CD4-positive, alpha-beta T cell (primary cell): ENCODE measurements at regions of chr11 and their contacts with region 1.

Region 1: DNA sequence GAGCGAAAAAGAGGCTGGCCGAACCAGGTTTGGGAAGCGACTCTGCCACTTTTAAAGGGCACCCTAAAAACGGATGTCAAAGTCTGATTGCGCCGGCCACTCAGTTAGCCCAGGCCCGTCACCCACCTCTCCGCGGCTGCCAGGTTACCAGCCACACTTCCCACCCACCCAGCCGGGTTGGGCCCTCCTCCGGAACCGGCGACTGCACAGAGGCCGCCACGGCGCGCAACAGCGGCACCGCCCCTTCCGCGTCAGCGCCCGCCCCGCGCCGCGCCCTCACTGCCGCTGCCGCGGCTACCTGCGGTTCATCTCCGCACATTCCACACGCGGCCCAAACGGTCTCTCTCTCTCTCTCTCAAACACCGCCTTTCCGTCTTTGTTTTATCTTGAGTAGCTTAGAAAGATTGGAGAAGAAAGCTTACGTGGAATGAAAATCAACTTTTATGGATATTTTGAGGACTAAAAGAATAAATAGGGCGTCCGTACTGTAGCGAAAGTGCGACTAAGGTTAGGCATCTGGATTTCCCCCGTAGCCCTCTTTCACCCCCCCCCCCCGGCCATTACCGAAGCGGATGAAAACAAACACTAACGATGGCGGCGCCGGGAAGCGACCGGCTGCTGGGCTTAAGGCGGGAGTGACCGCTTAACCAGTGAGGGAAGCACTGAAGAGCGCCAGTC is at the starts of genes ATG13 and HARBI1:
- DNase-seq: peak; percentile 84 to 96 (median 90)
- ATAC-seq: peak; percentile 92
- H3K4me3 ChIP-seq: peak within 1 kb of the TSS; percentile 76
- H3K4me3 Mint-ChIP-seq: peak within 1 kb of the TSS; percentile 100
- H3K27ac ChIP-seq: peak within 1 kb of the TSS; percentile 98 to 99
- H3K27ac Mint-ChIP-seq: peak within 1 kb of the TSS; percentile 97
- H3K4me1 ChIP-seq: peaks cover 45% of the 10 kb centered on the region
- H3K4me1 Mint-ChIP-seq: peaks cover 48% of the 10 kb centered on the region
- H3K27me3 ChIP-seq: no peaks in the 10 kb centered on the region
- H3K27me3 Mint-ChIP-seq: no peaks in the 10 kb centered on the region
- CTCF ChIP-seq: no peak
- total RNA-seq, gene ATG13: 95.7 to 102 TPM
- total RNA-seq, gene HARBI1: 18.2 to 18.7 TPM

Region 2: DNA sequence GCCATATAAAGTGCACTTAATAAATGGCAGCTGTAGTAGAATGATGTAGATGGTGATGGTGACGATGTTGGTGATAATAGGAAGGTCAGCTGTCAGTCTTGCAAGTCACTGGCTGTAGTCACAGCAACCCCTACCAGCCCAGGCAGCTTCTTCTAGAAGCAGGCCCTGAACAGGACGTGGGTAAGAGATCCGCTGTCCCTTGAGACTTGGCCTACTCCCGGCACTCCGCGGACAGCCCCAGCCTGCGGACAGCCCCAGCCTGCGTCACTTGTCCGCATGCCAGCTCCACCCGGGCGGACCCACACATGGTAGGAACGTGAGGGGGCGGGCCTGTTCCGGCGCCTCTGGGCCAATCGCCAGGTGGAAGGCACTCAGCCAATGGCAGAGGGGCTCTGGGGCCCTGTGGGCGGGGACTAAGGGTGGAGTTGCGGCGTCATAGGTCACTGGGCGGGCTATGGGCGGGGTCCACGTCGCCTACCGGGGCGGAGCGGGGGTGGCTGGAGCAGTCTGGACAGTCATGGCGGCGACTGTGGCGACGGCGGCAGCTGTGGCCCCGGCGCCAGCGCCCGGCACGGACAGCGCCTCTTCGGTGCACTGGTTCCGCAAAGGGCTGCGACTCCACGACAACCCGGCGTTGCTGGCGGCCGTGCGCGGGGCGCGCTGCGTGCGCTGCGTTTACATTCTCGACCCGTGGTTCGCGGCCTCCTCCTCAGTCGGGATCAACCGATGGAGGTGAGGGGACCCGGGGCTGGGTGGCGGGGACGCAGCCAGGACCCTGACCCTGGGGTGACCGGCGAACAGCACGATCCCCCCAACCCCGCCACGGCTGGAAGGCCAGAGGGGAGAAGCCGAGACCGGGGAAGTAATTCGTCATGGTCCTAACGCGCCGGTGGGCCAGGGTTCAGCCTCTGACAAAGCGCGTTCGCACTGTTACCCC is 769.9 kb before region 1 on chr11 and contains the start of gene CRY2:
- CTCF ChIA-PET with region 1: no interaction called
- POLR2A ChIA-PET with region 1: no interaction called
- intact Hi-C with region 1: loop called in 1 of 2 experiments (anchors 10 kb)
- DNase-seq: peak; percentile 95 to 99 (median 98)
- ATAC-seq: peak; percentile 77
- H3K4me3 ChIP-seq: peak within 1 kb of the TSS; percentile 94
- H3K4me3 Mint-ChIP-seq: peak within 1 kb of the TSS; percentile 96
- H3K27ac ChIP-seq: peak within 1 kb of the TSS; percentile 91 to 93
- H3K27ac Mint-ChIP-seq: peak within 1 kb of the TSS; percentile 100
- H3K4me1 ChIP-seq: peaks cover 41% of the 10 kb centered on the region
- H3K4me1 Mint-ChIP-seq: peaks cover 70% of the 10 kb centered on the region
- H3K27me3 ChIP-seq: no peaks in the 10 kb centered on the region
- H3K27me3 Mint-ChIP-seq: no peaks in the 10 kb centered on the region
- CTCF ChIP-seq: no peak
- total RNA-seq, gene CRY2: 248 TPM

Region 3: DNA sequence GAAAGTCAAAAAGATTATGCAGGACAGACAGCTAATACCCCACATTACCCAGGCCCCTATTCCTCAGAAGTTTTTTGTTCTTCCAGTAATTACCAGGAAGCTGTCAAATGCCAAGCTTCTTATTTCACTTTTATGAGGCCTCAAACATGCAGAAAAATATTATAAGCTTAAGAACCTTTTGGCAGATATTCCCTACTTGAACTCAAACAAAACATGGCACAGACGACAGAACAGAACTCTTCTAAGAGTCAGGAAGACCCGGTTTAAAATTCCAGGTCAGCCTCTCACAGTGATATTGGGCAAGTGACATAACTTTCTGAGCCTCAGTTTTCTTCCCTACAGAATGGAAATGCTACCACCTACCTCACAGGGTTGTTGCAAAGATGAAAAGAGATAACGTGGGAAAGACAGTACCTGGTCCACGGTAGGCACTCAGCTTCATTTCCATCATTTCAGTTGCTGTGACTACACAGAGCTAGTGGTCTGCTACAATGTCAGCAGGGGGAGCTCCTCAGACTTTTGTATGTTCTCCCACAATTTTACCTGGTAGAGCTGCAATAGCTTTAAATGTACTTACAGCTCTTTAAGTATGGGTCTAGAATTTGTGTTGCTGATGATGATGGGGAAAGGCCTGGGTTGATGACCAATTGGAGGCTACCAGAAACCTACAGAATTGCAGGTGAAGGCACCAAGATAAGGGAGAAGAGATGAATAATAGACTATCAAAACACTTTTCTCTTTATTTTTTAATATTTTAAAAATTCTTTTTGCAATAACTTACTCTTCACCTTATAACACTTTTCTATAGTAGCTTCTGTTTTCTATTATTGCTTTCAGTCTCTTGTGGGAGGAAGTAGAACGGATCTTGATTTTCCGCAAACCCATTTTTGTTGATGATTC is 127.2 kb before region 1 on chr11:
- CTCF ChIA-PET with region 1: interaction called, 3 read pairs
- POLR2A ChIA-PET with region 1: interaction called, 11 read pairs
- intact Hi-C with region 1: loop called (anchors 1 to 5 kb)
- DNase-seq: peak in 10 of 14 experiments; percentile 1 to 61 (median 14)
- ATAC-seq: peak; percentile 39
- H3K4me3 ChIP-seq: no peak overlapping the region
- H3K4me3 Mint-ChIP-seq: no peak overlapping the region
- H3K27ac ChIP-seq: no peak overlapping the region
- H3K27ac Mint-ChIP-seq: no peak overlapping the region
- H3K4me1 ChIP-seq: peaks cover 5% of the 10 kb centered on the region
- H3K4me1 Mint-ChIP-seq: peaks cover 5% of the 10 kb centered on the region
- H3K27me3 ChIP-seq: no peaks in the 10 kb centered on the region
- H3K27me3 Mint-ChIP-seq: no peaks in the 10 kb centered on the region
- CTCF ChIP-seq: peak; percentile 42

Region 4: GRCh38 chr11:46554205-46555055 is 62.7 kb before region 1 on chr11:
- CTCF ChIA-PET with region 1: no interaction called
- POLR2A ChIA-PET with region 1: no interaction called
- intact Hi-C with region 1: loop called in 1 of 2 experiments (anchors 10 kb)
- DNase-seq: no peak
- ATAC-seq: no peak
- H3K4me3 ChIP-seq: no peak overlapping the region
- H3K4me3 Mint-ChIP-seq: peak overlapping the region; percentile 27
- H3K27ac ChIP-seq: peak overlapping the region in 1 of 2 donors; percentile 38
- H3K27ac Mint-ChIP-seq: peak overlapping the region; percentile 38
- H3K4me1 ChIP-seq: peaks cover 36% of the 10 kb centered on the region
- H3K4me1 Mint-ChIP-seq: peaks cover 59% of the 10 kb centered on the region
- H3K27me3 ChIP-seq: no peaks in the 10 kb centered on the region
- H3K27me3 Mint-ChIP-seq: no peaks in the 10 kb centered on the region
- CTCF ChIP-seq: no peak

Region 5: GRCh38 chr11:46560300-46560991 is 56.7 kb before region 1 on chr11:
- CTCF ChIA-PET with region 1: no interaction called
- POLR2A ChIA-PET with region 1: interaction called, 18 read pairs
- intact Hi-C with region 1: loop called in 1 of 2 experiments (anchors 10 kb)
- DNase-seq: peak in 6 of 14 experiments; percentile 5 to 66 (median 38)
- ATAC-seq: peak; percentile 74
- H3K4me3 ChIP-seq: peak overlapping the region; percentile 59
- H3K4me3 Mint-ChIP-seq: peak overlapping the region; percentile 90
- H3K27ac ChIP-seq: peak overlapping the region; percentile 39 to 90
- H3K27ac Mint-ChIP-seq: peak overlapping the region; percentile 91
- H3K4me1 ChIP-seq: peaks cover 23% of the 10 kb centered on the region
- H3K4me1 Mint-ChIP-seq: peaks cover 69% of the 10 kb centered on the region
- H3K27me3 ChIP-seq: no peaks in the 10 kb centered on the region
- H3K27me3 Mint-ChIP-seq: no peaks in the 10 kb centered on the region
- CTCF ChIP-seq: no peak

Region 6: GRCh38 chr11:46593550-46594373 is 23.4 kb before region 1 on chr11 and contains the start of gene AMBRA1:
- CTCF ChIA-PET with region 1: interaction called, 7 read pairs
- POLR2A ChIA-PET with region 1: interaction called, 35 read pairs
- intact Hi-C with region 1: loop called (anchors 1 kb)
- DNase-seq: peak; percentile 67 to 91 (median 76)
- ATAC-seq: peak; percentile 90
- H3K4me3 ChIP-seq: peak within 1 kb of the TSS; percentile 94
- H3K4me3 Mint-ChIP-seq: peak within 1 kb of the TSS; percentile 92
- H3K27ac ChIP-seq: peak within 1 kb of the TSS; percentile 42 to 55
- H3K27ac Mint-ChIP-seq: peak within 1 kb of the TSS; percentile 85
- H3K4me1 ChIP-seq: peaks cover 33% of the 10 kb centered on the region
- H3K4me1 Mint-ChIP-seq: peaks cover 43% of the 10 kb centered on the region
- H3K27me3 ChIP-seq: no peaks in the 10 kb centered on the region
- H3K27me3 Mint-ChIP-seq: no peaks in the 10 kb centered on the region
- CTCF ChIP-seq: no peak
- total RNA-seq, gene AMBRA1: 29.4 to 31.9 TPM

Region 7: DNA sequence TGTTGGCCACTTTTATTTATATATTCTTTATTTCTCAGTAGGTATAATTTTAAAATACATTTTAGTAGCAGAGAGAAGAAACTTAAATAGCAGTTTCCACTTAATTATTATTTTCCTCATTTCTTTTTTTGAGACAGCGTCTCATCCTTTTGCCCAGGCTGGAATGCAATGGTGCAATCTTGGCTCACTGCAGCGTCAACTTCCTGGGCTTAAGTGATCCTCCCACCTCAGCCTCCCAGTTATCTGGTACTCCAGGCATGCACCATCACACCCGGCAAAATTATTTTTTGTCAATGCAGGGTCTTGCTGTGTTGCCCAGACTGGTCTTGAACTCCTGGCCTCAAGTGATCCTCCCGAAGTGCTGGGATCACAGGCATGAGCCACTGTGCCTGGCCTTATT is 38.5 kb after region 1 on chr11:
- CTCF ChIA-PET with region 1: no interaction called
- POLR2A ChIA-PET with region 1: no interaction called
- intact Hi-C with region 1: no loop called
- DNase-seq: no peak
- ATAC-seq: no peak
- H3K4me3 ChIP-seq: no peak overlapping the region
- H3K4me3 Mint-ChIP-seq: no peak overlapping the region
- H3K27ac ChIP-seq: no peak overlapping the region
- H3K27ac Mint-ChIP-seq: no peak overlapping the region
- H3K4me1 ChIP-seq: no peaks in the 10 kb centered on the region
- H3K4me1 Mint-ChIP-seq: no peaks in the 10 kb centered on the region
- H3K27me3 ChIP-seq: no peaks in the 10 kb centered on the region
- H3K27me3 Mint-ChIP-seq: no peaks in the 10 kb centered on the region
- CTCF ChIP-seq: no peak

Region 8: DNA sequence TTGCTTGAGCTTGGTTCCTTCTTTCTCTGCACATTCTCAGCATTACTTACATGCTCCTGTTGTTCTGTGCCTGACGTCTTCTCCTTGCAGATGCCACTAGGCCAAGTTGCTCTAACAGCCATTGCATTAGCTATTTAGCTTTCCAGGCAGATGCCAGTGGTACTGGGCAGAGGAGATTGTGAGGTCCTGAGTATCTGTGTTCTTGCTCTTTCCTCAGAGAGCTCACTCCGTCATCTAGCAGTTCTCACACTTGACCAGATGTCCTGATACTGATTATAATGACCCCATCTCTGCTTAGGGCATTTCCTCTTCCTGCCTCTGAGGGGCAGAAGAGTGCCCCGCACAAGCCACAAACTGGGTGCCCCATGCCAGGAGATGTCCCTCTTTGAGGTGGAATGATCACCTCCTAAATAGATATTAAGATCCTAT is 52.6 kb after region 1 on chr11:
- CTCF ChIA-PET with region 1: interaction called, 7 read pairs
- POLR2A ChIA-PET with region 1: interaction called, 24 read pairs
- intact Hi-C with region 1: loop called in 1 of 2 experiments (anchors 1 kb)
- DNase-seq: peak in 2 of 14 experiments; percentile 21 to 29
- ATAC-seq: no peak
- H3K4me3 ChIP-seq: no peak overlapping the region
- H3K4me3 Mint-ChIP-seq: peak overlapping the region; percentile 60
- H3K27ac ChIP-seq: peak overlapping the region in 1 of 2 donors; percentile 55
- H3K27ac Mint-ChIP-seq: peak overlapping the region; percentile 80
- H3K4me1 ChIP-seq: peaks cover 59% of the 10 kb centered on the region
- H3K4me1 Mint-ChIP-seq: peaks cover 59% of the 10 kb centered on the region
- H3K27me3 ChIP-seq: no peaks in the 10 kb centered on the region
- H3K27me3 Mint-ChIP-seq: no peaks in the 10 kb centered on the region
- CTCF ChIP-seq: no peak